ENCODE measurements at regions of chr2 and their contacts with region 1.

Region 1: DNA sequence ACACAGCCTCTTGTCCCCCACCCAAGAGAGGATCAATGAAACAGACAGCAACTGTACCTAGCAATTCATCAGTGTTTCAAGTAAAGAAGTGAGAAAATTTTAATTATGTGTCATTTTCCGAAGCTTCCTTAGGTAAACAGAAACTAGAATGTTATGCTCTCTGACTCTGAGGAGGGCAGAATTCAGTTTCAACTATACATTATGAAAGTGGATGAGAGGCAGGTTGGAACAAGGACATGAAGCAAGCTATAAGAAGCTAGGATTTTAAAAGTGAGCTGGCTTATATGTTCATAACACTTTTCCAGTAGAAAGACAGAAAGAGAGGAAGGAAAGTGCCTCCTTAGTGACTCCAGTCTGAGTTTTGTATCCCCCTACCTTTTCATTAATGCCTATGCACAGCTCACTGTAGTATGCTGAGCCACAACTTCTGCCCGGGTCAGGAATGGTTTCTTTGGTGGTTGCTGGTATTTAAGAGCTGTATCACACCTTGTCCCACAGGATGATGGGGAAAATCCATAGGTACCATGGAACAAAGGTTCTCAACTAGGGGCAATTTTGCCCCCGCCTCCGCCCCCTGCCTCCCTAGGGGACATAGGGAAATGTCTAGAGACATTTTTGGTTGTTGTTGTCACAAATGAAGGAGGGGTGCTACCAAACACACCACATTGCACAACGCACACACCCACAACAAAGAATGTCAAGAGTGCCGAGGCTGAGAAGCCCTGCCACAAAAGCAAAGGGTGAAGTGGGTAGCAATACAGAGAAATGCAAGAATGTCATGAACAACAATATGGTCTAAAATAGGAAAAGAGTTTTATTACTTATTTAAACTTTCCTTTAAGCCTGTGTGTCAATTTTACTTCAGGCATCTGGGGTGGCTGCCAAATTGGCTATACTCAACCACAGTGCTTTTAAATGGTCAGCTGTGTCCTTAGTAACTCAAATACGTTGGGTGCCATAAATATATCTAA is 161.0 kb upstream of the ZFP36L2 start:
- DNase-seq: no peak
- ATAC-seq: peak; percentile 67
- H3K4me3 Mint-ChIP-seq: peak overlapping the region; percentile 40
- H3K27ac Mint-ChIP-seq: peak overlapping the region; percentile 78
- H3K4me1 Mint-ChIP-seq: peaks cover 21% of the 10 kb centered on the region
- H3K27me3 Mint-ChIP-seq: no peaks in the 10 kb centered on the region
- CTCF ChIP-seq: no peak

Region 2: GRCh38 chr2:43426305-43427031 is 39.1 kb after region 1 on chr2:
- CTCF ChIA-PET with region 1: no interaction called
- POLR2A ChIA-PET with region 1: interaction called, 3 read pairs
- intact Hi-C with region 1: loop called (anchors 1 kb)
- DNase-seq: no peak
- ATAC-seq: peak; percentile 98
- H3K4me3 Mint-ChIP-seq: peak overlapping the region; percentile 61
- H3K27ac Mint-ChIP-seq: peak overlapping the region; percentile 70
- H3K4me1 Mint-ChIP-seq: peaks cover 37% of the 10 kb centered on the region
- H3K27me3 Mint-ChIP-seq: no peaks in the 10 kb centered on the region
- CTCF ChIP-seq: no peak

Region 3: GRCh38 chr2:43461453-43462073 is 74.2 kb after region 1 on chr2:
- CTCF ChIA-PET with region 1: no interaction called
- POLR2A ChIA-PET with region 1: no interaction called
- intact Hi-C with region 1: loop called (anchors 5 kb)
- DNase-seq: no peak
- ATAC-seq: peak; percentile 62
- H3K4me3 Mint-ChIP-seq: no peak overlapping the region
- H3K27ac Mint-ChIP-seq: peak overlapping the region; percentile 67
- H3K4me1 Mint-ChIP-seq: peaks cover 34% of the 10 kb centered on the region
- H3K27me3 Mint-ChIP-seq: no peaks in the 10 kb centered on the region
- CTCF ChIP-seq: no peak